GM12878 (cell line): ENCODE measurements at regions of chr1 and their contacts with region 1.

Region 1: DNA sequence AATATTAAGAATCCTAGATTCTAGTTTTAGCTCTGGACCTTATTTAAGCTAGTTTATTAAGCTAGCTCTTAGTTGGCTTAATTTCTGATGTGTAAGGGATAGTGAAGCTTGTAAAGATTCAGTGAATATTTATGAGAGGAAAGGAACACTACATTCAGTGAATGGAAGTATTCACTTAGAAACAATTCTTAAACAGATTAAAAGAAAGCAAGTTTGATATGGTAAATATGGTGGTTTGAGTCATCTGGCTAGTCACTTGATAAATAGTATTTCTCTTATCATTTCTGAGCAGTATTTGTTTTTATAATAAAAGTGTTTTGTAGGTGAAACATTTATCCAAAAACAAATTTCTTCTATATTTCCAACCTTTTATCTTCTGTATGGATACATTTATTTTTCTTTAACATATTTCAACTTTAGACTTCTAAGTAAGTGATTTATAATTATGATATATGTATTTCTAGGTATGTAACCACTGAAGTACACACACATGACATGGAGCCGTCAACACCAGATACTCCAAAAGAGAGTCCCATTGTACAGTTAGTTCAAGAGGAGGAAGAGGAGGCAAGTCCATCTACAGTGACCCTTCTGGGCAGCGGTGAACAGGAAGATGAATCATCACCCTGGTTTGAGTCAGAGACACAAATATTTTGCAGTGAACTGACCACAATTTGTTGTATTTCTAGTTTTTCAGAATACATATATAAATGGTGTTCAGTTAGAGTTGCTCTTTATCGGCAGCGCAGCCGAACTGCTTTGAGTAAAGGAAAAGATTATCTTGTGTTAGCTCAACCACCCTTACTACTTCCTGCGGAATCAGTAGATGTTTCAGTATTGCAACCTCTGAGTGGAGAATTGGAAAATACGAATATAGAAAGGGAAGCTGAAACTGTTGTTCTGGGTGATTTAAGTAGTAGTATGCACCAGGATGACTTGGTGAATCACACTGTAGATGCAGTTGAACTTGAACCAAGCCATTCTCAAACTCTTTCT is 55.6 kb downstream of the SUCO start:
- DNase-seq: no peak
- ATAC-seq: peak; percentile 48
- H3K4me3 ChIP-seq: no peak overlapping the region
- H3K27ac ChIP-seq: no peak overlapping the region; the same call in 1 of the 2 replicates
- H3K4me1 ChIP-seq: peaks cover 4% of the 10 kb centered on the region; the same call in 1 of the 2 replicates
- H3K27me3 ChIP-seq: no peaks in the 10 kb centered on the region
- CTCF ChIP-seq: no peak
- EP300 ChIP-seq: no peak
- POLR2A ChIP-seq: no peak
- RAD21 ChIP-seq: no peak

Region 2: GRCh38 chr1:172449585-172450534 is 138.7 kb before region 1 on chr1:
- CTCF ChIA-PET with region 1: no interaction called
- POLR2A ChIA-PET with region 1: no interaction called
- RAD21 ChIA-PET with region 1: no interaction called
- SMC1A ChIA-PET with region 1: no interaction called
- in situ Hi-C with region 1: no loop called
- intact Hi-C with region 1: loop called (anchors 10 kb)
- DNase-seq: no peak
- ATAC-seq: peak; percentile 96
- H3K4me3 ChIP-seq: no peak overlapping the region
- H3K27ac ChIP-seq: no peak overlapping the region
- H3K4me1 ChIP-seq: no peaks in the 10 kb centered on the region
- H3K27me3 ChIP-seq: no peaks in the 10 kb centered on the region; a peak in 1 of 4 replicates
- CTCF ChIP-seq: peak; percentile 83 to 88 (median 84)
- EP300 ChIP-seq: no peak
- POLR2A ChIP-seq: no peak
- RAD21 ChIP-seq: peak; percentile 72